Activated B cell treated with CpG ODN at 0.5 μM for 24 hours (primary cell): ENCODE measurements at regions of chr1 and their contacts with region 1.

Region 1: DNA sequence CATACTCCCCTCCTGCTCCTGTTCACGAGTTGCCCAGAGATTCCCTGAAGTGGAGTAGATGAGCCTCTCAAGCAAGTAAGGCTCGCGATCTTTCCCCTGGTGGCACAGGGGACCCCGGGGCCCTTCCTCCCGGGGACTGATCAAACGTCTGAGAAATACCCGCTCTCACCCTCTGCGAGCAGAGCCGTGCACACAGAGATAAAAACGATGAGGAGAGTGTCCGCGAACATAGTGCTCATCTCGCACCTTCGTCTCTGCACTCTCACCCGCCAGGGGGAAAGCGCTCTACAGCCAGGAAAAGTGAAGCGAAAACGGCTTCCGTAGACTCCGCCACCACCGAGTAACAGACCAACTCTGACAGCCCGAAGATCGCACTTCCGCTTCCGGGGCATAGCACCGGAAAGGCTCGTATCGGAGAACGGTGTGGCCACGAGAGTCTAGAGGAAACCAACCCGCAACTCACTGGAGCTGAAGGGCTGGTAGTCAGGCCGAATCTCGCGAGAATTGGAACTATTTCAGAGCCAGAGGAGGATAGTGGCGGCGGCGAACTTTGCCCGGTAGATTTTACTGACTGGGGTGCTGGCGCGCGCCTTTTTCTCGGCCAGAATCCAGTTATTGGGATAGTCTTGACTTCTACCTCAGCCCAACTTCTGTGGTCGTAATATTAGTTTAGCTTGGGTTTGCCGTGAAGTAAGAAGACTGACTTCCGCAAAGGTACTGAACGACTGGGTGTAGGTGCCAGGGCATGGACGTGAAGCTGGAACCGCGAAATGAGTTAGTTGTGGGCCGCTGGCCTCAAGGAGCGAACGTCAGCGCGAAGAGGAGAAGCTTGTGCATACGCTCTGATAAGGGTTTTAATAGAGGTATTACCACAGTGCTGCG is at the start of gene TMCO1:
- DNase-seq: peak; percentile 84
- ATAC-seq: peak; percentile 95
- H3K4me3 Mint-ChIP-seq: peak within 1 kb of the TSS; percentile 97
- H3K27ac Mint-ChIP-seq: peak within 1 kb of the TSS; percentile 98
- H3K4me1 Mint-ChIP-seq: peaks cover 54% of the 10 kb centered on the region
- H3K27me3 Mint-ChIP-seq: no peaks in the 10 kb centered on the region
- CTCF ChIP-seq: no peak
- total RNA-seq, gene TMCO1: 43.0 and 48.3 TPM in 2 replicates

Region 2: GRCh38 chr1:165630629-165631341 is 138.0 kb before region 1 on chr1 and contains the start of gene MGST3:
- CTCF ChIA-PET with region 1: no interaction called
- POLR2A ChIA-PET with region 1: interaction called, 8 read pairs
- intact Hi-C with region 1: loop called (anchors 1 kb)
- DNase-seq: peak; percentile 84
- ATAC-seq: peak; percentile 93
- H3K4me3 Mint-ChIP-seq: no peak within 1 kb of the TSS
- H3K27ac Mint-ChIP-seq: no peak within 1 kb of the TSS
- H3K4me1 Mint-ChIP-seq: peaks cover 33% of the 10 kb centered on the region
- H3K27me3 Mint-ChIP-seq: no peaks in the 10 kb centered on the region
- CTCF ChIP-seq: no peak
- total RNA-seq, gene MGST3: 31.3 and 33.4 TPM in 2 replicates

Region 3: GRCh38 chr1:165747632-165748447 is 20.9 kb before region 1 on chr1:
- CTCF ChIA-PET with region 1: no interaction called
- POLR2A ChIA-PET with region 1: no interaction called
- intact Hi-C with region 1: no loop called
- DNase-seq: no peak
- ATAC-seq: no peak
- H3K4me3 Mint-ChIP-seq: no peak overlapping the region
- H3K27ac Mint-ChIP-seq: no peak overlapping the region
- H3K4me1 Mint-ChIP-seq: no peaks in the 10 kb centered on the region
- H3K27me3 Mint-ChIP-seq: no peaks in the 10 kb centered on the region
- CTCF ChIP-seq: no peak

Region 4: DNA sequence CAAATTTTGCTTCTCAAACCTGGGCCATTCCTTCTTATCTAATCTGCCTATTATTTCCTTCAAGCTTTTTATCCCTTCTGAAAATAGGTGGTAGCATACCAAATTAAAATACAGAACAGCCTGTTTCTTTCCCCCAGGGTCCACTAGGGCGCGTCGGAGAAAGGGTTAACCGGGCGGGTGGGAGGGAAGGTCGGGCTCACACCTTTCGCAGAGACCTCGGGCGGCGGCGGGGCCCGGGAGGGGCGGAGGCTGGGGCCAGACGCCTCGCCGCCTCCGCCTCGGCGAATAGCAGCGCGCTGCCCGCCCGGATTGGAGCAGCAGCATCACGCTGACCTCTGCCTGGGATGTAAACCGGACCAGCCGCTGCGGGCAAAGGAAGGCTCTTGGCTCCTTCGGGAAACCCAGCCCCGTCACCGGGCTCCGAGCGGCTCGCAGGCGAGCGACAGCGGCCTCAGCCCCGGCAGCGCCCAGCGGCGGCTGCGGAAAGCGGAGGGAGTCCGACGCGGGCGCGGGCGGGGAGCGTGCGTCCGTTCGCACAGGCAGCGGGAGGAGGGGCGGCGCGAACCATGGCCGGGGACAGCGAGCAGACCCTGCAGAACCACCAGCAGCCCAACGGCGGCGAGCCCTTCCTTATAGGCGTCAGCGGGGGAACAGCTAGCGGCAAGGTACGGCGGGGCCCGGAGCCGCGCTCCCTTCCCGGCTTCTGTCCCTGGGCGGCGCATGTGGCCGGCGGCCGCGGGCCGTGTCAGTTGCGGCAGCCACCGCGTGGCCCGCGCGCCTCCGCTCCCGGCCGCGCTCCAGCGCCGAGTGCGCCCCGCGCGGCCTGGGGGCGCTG is 58.7 kb after region 1 on chr1 and contains the start of gene UCK2:
- CTCF ChIA-PET with region 1: interaction called, 6 read pairs
- POLR2A ChIA-PET with region 1: interaction called, 25 read pairs
- intact Hi-C with region 1: loop called (anchors 1 kb)
- DNase-seq: peak; percentile 70
- ATAC-seq: peak; percentile 75
- H3K4me3 Mint-ChIP-seq: peak within 1 kb of the TSS; percentile 92
- H3K27ac Mint-ChIP-seq: peak within 1 kb of the TSS; percentile 80
- H3K4me1 Mint-ChIP-seq: peaks cover 21% of the 10 kb centered on the region
- H3K27me3 Mint-ChIP-seq: no peaks in the 10 kb centered on the region
- CTCF ChIP-seq: no peak
- total RNA-seq, gene UCK2: 19.6 and 22.8 TPM in 2 replicates

Region 5: DNA sequence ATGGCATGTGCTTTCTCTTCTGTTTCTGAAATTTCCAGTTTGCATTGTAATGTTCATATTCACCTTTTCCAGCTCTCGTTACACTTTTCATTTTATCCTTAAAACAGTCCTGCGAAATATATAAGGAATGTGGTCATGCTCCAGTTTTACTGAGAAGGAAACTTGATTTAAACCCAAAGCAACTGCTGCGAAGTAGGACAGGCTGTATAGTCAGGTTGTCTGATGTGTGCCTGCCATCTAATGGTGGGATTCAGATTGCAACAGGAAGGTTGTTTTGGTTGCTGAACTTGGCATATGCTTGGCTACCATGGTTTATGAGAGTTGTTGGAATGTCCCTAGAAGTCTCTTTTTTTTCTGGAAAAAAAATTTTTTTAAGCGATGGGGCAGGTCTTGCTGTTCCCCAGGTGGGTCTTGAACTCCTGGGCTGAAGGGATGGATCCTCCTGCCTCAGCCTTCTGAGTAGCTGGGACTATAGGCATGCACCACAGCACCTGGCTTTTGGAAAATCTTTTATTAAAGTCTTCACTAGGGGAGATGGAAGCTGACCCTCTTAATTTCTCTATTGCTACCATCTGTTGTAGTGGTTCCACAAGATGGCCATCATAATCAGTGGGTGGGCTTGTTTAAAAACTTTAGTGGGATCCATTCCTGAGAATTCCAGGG is 145.5 kb after region 1 on chr1:
- CTCF ChIA-PET with region 1: no interaction called
- POLR2A ChIA-PET with region 1: no interaction called
- intact Hi-C with region 1: loop called (anchors 1 kb)
- DNase-seq: peak; percentile 20
- ATAC-seq: peak; percentile 93
- H3K4me3 Mint-ChIP-seq: no peak overlapping the region
- H3K27ac Mint-ChIP-seq: no peak overlapping the region
- H3K4me1 Mint-ChIP-seq: peaks cover 2% of the 10 kb centered on the region
- H3K27me3 Mint-ChIP-seq: no peaks in the 10 kb centered on the region
- CTCF ChIP-seq: peak; percentile 99

Region 6: GRCh38 chr1:166489670-166490436 is 721.1 kb after region 1 on chr1:
- CTCF ChIA-PET with region 1: no interaction called
- POLR2A ChIA-PET with region 1: interaction called, 4 read pairs
- intact Hi-C with region 1: loop called (anchors 2 kb)
- DNase-seq: peak; percentile 34
- ATAC-seq: peak; percentile 77
- H3K4me3 Mint-ChIP-seq: no peak overlapping the region
- H3K27ac Mint-ChIP-seq: no peak overlapping the region
- H3K4me1 Mint-ChIP-seq: peaks cover 6% of the 10 kb centered on the region
- H3K27me3 Mint-ChIP-seq: peaks cover 3% of the 10 kb centered on the region
- CTCF ChIP-seq: no peak